WTC11 (cell line): ENCODE measurements at regions of chr5 and their contacts with region 1.

Region 1: GRCh38 chr5:140547508-140548299 is at the start of gene EIF4EBP3:
- DNase-seq: peak; percentile 98
- ATAC-seq: peak; percentile 95
- H3K4me3 Mint-ChIP-seq: peak within 1 kb of the TSS; percentile 77
- H3K27ac Mint-ChIP-seq: peak within 1 kb of the TSS; percentile 97
- H3K4me1 Mint-ChIP-seq: peaks cover 25% of the 10 kb centered on the region
- H3K27me3 Mint-ChIP-seq: no peaks in the 10 kb centered on the region
- CTCF ChIP-seq: no peak
- total RNA-seq, gene EIF4EBP3: 8.4 to 9.8 TPM (median 8.8 TPM) in 3 replicates

Region 2: GRCh38 chr5:140362860-140363630 is 184.7 kb before region 1 on chr5:
- CTCF ChIA-PET with region 1: interaction called, 20 read pairs
- POLR2A ChIA-PET with region 1: no interaction called
- DNase-seq: peak; percentile 95
- ATAC-seq: peak; percentile 88
- H3K4me3 Mint-ChIP-seq: peak overlapping the region; percentile 79
- H3K27ac Mint-ChIP-seq: no peak overlapping the region
- H3K4me1 Mint-ChIP-seq: peaks cover 7% of the 10 kb centered on the region
- H3K27me3 Mint-ChIP-seq: peaks cover 9% of the 10 kb centered on the region
- CTCF ChIP-seq: peak; percentile 96

Region 3: GRCh38 chr5:140372971-140373487 is 174.7 kb before region 1 on chr5:
- CTCF ChIA-PET with region 1: interaction called, 28 read pairs
- POLR2A ChIA-PET with region 1: no interaction called
- DNase-seq: peak; percentile 88
- ATAC-seq: peak; percentile 97
- H3K4me3 Mint-ChIP-seq: no peak overlapping the region
- H3K27ac Mint-ChIP-seq: peak overlapping the region; percentile 62
- H3K4me1 Mint-ChIP-seq: peaks cover 4% of the 10 kb centered on the region
- H3K27me3 Mint-ChIP-seq: no peaks in the 10 kb centered on the region; the same call in 1 of the 2 replicates
- CTCF ChIP-seq: peak; percentile 66

Region 4: GRCh38 chr5:140401362-140402257 is 146.1 kb before region 1 on chr5 and contains the start of gene ANKHD1:
- CTCF ChIA-PET with region 1: interaction called, 5 read pairs
- POLR2A ChIA-PET with region 1: interaction called, 20 read pairs
- DNase-seq: peak; percentile 98
- ATAC-seq: peak; percentile 87
- H3K4me3 Mint-ChIP-seq: no peak within 1 kb of the TSS
- H3K27ac Mint-ChIP-seq: peak within 1 kb of the TSS; percentile 95
- H3K4me1 Mint-ChIP-seq: peaks cover 47% of the 10 kb centered on the region
- H3K27me3 Mint-ChIP-seq: no peaks in the 10 kb centered on the region
- CTCF ChIP-seq: no peak
- total RNA-seq, gene ANKHD1: 89.8 to 113 TPM (median 105 TPM) in 3 replicates

Region 5: DNA sequence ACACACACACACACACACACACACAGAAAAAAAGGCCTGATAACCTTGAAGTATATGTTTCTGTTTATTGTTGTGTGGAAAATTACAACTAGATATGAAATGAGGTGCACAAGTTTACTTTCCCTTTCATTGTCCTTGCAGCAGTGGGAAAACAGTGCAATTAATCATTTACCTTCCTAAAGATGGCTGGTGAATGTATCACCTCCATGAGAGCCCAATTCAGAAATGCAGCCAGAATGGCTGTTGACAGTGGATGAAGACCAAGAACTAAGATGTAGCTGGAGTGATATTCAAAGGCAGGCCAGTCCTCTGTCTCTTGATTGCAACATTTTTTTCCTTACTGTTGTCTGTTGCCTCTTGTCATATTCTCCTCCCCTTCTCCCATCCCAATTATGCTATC is 49.8 kb before region 1 on chr5:
- CTCF ChIA-PET with region 1: no interaction called
- POLR2A ChIA-PET with region 1: no interaction called
- DNase-seq: no peak
- ATAC-seq: no peak
- H3K4me3 Mint-ChIP-seq: no peak overlapping the region
- H3K27ac Mint-ChIP-seq: no peak overlapping the region
- H3K4me1 Mint-ChIP-seq: no peaks in the 10 kb centered on the region
- H3K27me3 Mint-ChIP-seq: no peaks in the 10 kb centered on the region
- CTCF ChIP-seq: no peak

Region 6: GRCh38 chr5:140564196-140565023 is 16.7 kb after region 1 on chr5 and contains the starts of genes APBB3 and SLC35A4:
- CTCF ChIA-PET with region 1: interaction called, 6 read pairs
- POLR2A ChIA-PET with region 1: interaction called, 47 read pairs
- DNase-seq: peak; percentile 90
- ATAC-seq: peak; percentile 87
- H3K4me3 Mint-ChIP-seq: peak within 1 kb of the TSS; percentile 88
- H3K27ac Mint-ChIP-seq: peak within 1 kb of the TSS; percentile 73
- H3K4me1 Mint-ChIP-seq: peaks cover 19% of the 10 kb centered on the region
- H3K27me3 Mint-ChIP-seq: peaks cover 3% of the 10 kb centered on the region; the same call in 1 of the 2 replicates
- CTCF ChIP-seq: no peak
- total RNA-seq, gene APBB3: 23.7 to 25.9 TPM (median 25.2 TPM) in 3 replicates
- total RNA-seq, gene SLC35A4: 74.7 to 75.7 TPM (median 74.8 TPM) in 3 replicates

Region 7: DNA sequence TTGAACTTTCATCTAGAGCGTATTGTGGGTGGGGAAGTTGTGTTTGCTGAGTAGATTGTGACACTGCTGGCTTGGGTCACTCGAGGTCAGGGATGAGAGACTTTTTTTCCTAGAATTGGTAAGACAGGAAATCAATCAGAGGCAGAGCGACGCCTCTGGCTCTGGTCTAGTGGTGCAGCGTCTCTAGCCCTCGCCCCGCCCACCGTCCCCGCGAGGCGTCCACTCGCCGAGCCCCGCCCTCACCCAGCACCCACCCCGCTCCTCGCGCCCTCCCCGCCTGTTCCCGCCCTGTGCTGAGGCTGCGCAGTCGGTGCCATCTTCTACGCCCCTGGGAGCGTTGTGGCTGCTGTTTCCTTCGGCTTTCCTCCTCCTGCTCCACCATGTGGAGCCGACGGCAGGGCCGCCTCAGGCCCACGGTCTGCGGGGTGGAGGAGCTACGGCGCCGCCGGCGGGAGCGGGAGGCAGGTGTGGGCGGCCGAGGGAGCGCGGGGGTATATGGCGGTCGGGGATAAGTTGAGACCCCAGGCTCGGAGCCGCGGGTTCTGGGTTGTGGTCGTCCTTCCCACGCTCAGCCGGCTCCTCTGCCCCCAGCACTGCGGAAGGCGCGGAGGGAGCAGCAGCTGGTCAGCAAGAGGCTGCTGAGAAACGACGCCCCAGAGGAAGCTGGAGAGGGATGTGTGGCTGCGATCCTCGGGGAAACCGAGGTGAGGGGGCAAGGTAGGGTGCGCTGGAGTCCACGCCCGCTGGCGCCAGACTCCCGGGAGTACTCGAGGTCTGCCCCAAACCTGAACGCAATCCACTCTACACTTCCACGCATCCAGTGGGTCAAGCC is 91.7 kb after region 1 on chr5 and contains the start of gene TMCO6:
- CTCF ChIA-PET with region 1: interaction called, 20 read pairs
- POLR2A ChIA-PET with region 1: interaction called, 7 read pairs
- DNase-seq: peak; percentile 96
- ATAC-seq: peak; percentile 97
- H3K4me3 Mint-ChIP-seq: peak within 1 kb of the TSS; percentile 88
- H3K27ac Mint-ChIP-seq: peak within 1 kb of the TSS; percentile 87
- H3K4me1 Mint-ChIP-seq: peaks cover 17% of the 10 kb centered on the region
- H3K27me3 Mint-ChIP-seq: peaks cover 2% of the 10 kb centered on the region; the same call in 1 of the 2 replicates
- CTCF ChIP-seq: no peak
- total RNA-seq, gene TMCO6: 28.7 to 32.6 TPM (median 32.2 TPM) in 3 replicates

Region 8: DNA sequence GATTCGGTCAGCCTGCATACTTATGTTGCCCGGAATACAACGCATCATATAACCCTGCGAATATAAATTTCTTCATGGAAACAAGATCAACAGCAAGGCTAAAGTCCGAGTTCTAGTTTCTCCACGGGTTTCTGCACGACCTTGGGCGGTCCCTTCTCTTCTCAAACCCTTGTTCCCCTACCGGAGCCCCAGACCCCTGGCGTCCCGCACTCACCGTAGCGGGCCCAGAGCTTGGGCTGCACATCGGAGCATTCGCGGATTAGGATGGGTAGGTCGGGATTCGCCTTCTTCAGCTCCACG is 99.3 kb after region 1 on chr5:
- CTCF ChIA-PET with region 1: interaction called, 21 read pairs
- POLR2A ChIA-PET with region 1: interaction called, 29 read pairs
- DNase-seq: no peak
- ATAC-seq: peak; percentile 7
- H3K4me3 Mint-ChIP-seq: peak overlapping the region; percentile 98
- H3K27ac Mint-ChIP-seq: peak overlapping the region; percentile 74
- H3K4me1 Mint-ChIP-seq: peaks cover 10% of the 10 kb centered on the region
- H3K27me3 Mint-ChIP-seq: no peaks in the 10 kb centered on the region
- CTCF ChIP-seq: no peak